AG04450 (cell line): ENCODE measurements at regions of chr7 and their contacts with region 1.

Region 1: GRCh38 chr7:140810830-140811556 is 113.7 kb downstream of the BRAF start:
- DNase-seq: peak; percentile 36
- H3K4me3 ChIP-seq: no peak overlapping the region
- H3K27ac ChIP-seq: no peak overlapping the region
- H3K27me3 ChIP-seq: no peaks in the 10 kb centered on the region
- CTCF ChIP-seq: peak; percentile 73

Region 2: GRCh38 chr7:140828741-140829140 is 17.7 kb after region 1 on chr7:
- CTCF ChIA-PET with region 1: interaction called, 22 read pairs
- POLR2A ChIA-PET with region 1: no interaction called
- DNase-seq: no peak
- H3K4me3 ChIP-seq: no peak overlapping the region
- H3K27ac ChIP-seq: no peak overlapping the region
- H3K27me3 ChIP-seq: no peaks in the 10 kb centered on the region
- CTCF ChIP-seq: no peak

Region 3: GRCh38 chr7:140924019-140924820 is 113.2 kb after region 1 on chr7:
- CTCF ChIA-PET with region 1: interaction called, 40 read pairs
- POLR2A ChIA-PET with region 1: no interaction called
- DNase-seq: peak; percentile 16
- H3K4me3 ChIP-seq: peak overlapping the region; percentile 87
- H3K27ac ChIP-seq: peak overlapping the region; percentile 89
- H3K27me3 ChIP-seq: no peaks in the 10 kb centered on the region
- CTCF ChIP-seq: peak; percentile 65

Region 4: GRCh38 chr7:141014524-141015395 is 203.8 kb after region 1 on chr7 and contains the start of gene MRPS33:
- CTCF ChIA-PET with region 1: interaction called, 130 read pairs
- POLR2A ChIA-PET with region 1: no interaction called
- DNase-seq: peak; percentile 90
- H3K4me3 ChIP-seq: peak within 1 kb of the TSS; percentile 88
- H3K27ac ChIP-seq: peak within 1 kb of the TSS; percentile 77
- H3K27me3 ChIP-seq: no peaks in the 10 kb centered on the region
- CTCF ChIP-seq: peak; percentile 35
- polyA plus RNA-seq, gene MRPS33: 80.1 and 99.2 TPM in 2 replicates

Region 5: DNA sequence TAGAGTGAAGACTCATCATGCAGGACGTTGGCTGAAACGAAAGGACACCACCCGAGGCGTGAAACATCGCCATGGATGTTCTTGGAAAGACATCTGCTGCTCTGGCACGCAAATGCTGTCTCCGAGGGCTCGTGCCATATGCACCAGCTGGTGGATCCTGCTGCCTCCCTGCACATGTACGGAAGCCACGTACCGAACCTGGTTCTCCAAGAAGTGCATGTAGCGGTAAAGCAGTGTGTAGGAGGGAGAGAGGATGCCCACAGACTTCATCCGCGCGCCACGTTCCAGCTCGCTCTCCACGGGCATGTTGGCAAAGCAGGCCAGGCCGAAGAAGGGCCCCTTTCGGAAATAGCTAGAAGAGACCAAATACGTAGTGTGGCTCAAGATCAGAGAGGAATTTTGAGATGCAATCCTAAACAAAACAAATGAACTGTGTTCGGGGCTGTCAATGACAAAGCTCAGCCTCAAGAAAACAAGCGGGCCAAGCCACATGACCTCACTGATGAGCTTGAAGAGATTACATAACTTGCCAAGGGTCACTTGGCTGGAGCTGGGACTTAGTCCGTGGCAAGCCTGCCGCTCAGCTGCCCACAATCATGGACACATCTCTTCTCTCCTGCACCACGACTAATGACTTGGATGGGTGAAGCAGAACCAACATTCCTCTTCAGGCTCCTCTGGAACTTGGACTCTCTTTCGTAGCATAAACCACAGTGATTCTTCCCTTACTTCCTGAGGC is 874.5 kb after region 1 on chr7:
- CTCF ChIA-PET with region 1: no interaction called
- POLR2A ChIA-PET with region 1: no interaction called
- DNase-seq: no peak
- H3K4me3 ChIP-seq: no peak overlapping the region
- H3K27ac ChIP-seq: no peak overlapping the region
- H3K27me3 ChIP-seq: no peaks in the 10 kb centered on the region
- CTCF ChIP-seq: no peak